ENCODE measurements at regions of chr19 and their contacts with region 1.

Region 1: GRCh38 chr19:18160971-18161635 is 8.1 kb downstream of the PIK3R2 start:
- DNase-seq: peak; percentile 68 to 89 (median 76)
- ATAC-seq: peak; percentile 17 to 80 (median 64)
- H3K4me3 ChIP-seq: peak overlapping the region in 11 of 12 donors; percentile 16 to 61 (median 52)
- H3K27ac ChIP-seq: peak overlapping the region; percentile 69 to 93 (median 84)
- H3K4me1 ChIP-seq: peaks cover 5 to 41% (median 27%) of the 10 kb centered on the region in 12 donors
- H3K27me3 ChIP-seq: no peaks in the 10 kb centered on the region
- CTCF ChIP-seq: peak; percentile 32 to 92 (median 66)
- POLR2A ChIP-seq: no peak

Region 2: GRCh38 chr19:17766543-17767131 is 394.5 kb before region 1 on chr19:
- intact Hi-C with region 1: no loop called
- DNase-seq: peak; percentile 71 to 91 (median 80)
- ATAC-seq: peak; percentile 32 to 92 (median 85)
- H3K4me3 ChIP-seq: peak overlapping the region in 5 of 12 donors; percentile 7 to 30 (median 25)
- H3K27ac ChIP-seq: no peak overlapping the region
- H3K4me1 ChIP-seq: peaks cover 0 to 13% (median 6%) of the 10 kb centered on the region in 12 donors
- H3K27me3 ChIP-seq: no peaks in the 10 kb centered on the region
- CTCF ChIP-seq: peak; percentile 77 to 90 (median 79)
- POLR2A ChIP-seq: no peak

Region 3: GRCh38 chr19:18192673-18193387 is 31.7 kb after region 1 on chr19 and contains the start of gene MPV17L2:
- intact Hi-C with region 1: loop called in 1 of 10 experiments (anchors 1 kb)
- DNase-seq: peak; percentile 100
- ATAC-seq: peak; percentile 94 to 99 (median 96)
- H3K4me3 ChIP-seq: peak within 1 kb of the TSS; percentile 40 to 99 (median 84)
- H3K27ac ChIP-seq: peak within 1 kb of the TSS; percentile 78 to 99 (median 94)
- H3K4me1 ChIP-seq: peaks cover 0 to 25% (median 14%) of the 10 kb centered on the region in 12 donors
- H3K27me3 ChIP-seq: no peaks in the 10 kb centered on the region
- CTCF ChIP-seq: no peak
- POLR2A ChIP-seq: peak; percentile 82 to 89
- total RNA-seq, gene MPV17L2: 10.6 to 37.4 (median 14.8) TPM

Measured in heart left ventricle (tissue), 16 donors.